Dorsolateral prefrontal cortex (tissue), 120 donors: ENCODE measurements at regions of chrX and their contacts with region 1.

Region 1: DNA sequence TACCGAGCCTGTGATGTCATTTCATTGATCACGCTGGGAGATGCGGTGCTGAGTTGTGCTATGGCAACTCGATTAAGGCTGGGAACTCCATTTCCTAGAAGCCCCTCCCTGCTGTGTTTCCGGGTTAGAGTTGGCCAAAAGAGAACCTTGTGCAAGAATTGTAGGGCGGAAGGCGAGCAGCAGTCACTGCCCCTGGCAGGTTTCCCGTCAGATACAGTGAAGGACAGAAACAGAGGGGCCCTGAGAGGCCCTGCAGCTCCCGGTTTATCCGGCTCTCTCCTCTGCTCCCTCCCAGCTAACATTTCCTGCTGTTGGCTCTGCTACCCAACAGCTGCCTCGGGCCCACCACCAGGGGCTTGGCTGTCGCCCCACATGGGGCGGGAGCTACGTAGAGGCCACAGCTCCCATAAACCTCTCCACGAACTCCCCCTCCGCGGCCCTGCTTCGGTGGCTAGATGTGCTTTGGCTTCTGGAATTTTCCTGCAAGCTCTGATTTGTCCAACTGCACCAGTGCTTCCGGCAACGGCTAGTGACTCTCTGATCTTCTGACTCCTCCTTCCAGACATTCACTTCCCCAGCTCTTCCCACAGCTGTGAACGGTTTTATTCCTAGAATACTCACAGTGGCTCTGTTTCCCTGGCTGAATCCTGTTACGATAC is 74.9 kb upstream of the USP9X start:
- DNase-seq: peak in 8 of 10 donors; percentile 5 to 66 (median 46)
- H3K4me3 ChIP-seq: peak overlapping the region in 57 of 59 donors; percentile 1 to 60 (median 44)
- H3K27ac ChIP-seq: peak overlapping the region in 54 of 59 donors; percentile 23 to 91 (median 76)
- H3K27me3 ChIP-seq: peaks cover 0 to 84% (median 14%) of the 10 kb centered on the region in 45 donors
- CTCF ChIP-seq: peak in 7 of 56 donors; percentile 9 to 22 (median 14)

Region 2: DNA sequence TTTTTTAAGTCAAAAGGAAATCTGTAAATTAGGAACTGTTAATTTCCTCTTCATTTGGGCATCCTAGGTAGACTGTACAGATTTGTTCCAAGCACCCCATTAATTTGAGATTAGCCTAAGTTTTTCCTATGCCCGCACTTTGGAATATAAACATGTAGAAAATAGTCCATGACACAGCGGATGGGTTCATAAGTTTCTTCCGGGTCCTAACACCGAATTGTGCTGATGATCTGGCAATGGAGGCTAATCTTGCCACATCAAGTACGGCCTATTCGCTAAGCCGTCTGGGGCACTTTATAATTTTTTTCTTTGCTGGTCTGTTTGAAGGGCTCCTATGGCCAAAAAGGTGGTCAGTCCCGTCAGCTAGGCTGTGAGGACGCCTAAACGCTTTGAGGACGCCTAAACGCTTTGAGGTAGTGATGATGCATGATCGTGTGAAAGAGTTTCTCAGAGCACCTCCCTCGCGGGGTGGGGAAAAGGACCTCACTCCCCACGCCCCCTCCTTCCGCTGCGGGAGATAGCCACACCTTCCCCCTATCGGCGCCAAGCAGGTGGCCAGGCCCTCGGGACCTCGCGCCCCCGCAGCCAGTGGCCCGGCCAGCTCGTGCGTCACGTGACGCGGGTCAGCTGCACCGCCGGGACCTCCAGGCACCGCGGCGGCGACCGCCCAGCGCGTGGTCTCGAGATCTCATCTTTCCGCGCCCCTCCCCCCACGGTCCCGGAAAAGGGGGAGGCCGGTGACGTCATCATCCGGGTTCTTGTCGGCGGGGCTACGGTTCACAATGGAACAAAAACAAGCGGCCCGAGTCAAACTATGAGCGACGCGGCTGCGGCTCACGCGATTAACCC is 74.0 kb after region 1 on chrX:
- intact Hi-C with region 1: loop called in 1 of 2 experiments (anchors 5 kb)
- DNase-seq: peak; percentile 93 to 96 (median 94)
- H3K4me3 ChIP-seq: peak overlapping the region; percentile 45 to 99 (median 93)
- H3K27ac ChIP-seq: peak overlapping the region; percentile 92 to 99 (median 98)
- H3K27me3 ChIP-seq: peaks cover 0 to 8% (median 0%) of the 10 kb centered on the region in 45 donors
- CTCF ChIP-seq: peak in 15 of 56 donors; percentile 5 to 35 (median 16)